Naive thymus-derived CD4-positive, alpha-beta T cell (primary cell): ENCODE measurements at regions of chr15 and their contacts with region 1.

Region 1: DNA sequence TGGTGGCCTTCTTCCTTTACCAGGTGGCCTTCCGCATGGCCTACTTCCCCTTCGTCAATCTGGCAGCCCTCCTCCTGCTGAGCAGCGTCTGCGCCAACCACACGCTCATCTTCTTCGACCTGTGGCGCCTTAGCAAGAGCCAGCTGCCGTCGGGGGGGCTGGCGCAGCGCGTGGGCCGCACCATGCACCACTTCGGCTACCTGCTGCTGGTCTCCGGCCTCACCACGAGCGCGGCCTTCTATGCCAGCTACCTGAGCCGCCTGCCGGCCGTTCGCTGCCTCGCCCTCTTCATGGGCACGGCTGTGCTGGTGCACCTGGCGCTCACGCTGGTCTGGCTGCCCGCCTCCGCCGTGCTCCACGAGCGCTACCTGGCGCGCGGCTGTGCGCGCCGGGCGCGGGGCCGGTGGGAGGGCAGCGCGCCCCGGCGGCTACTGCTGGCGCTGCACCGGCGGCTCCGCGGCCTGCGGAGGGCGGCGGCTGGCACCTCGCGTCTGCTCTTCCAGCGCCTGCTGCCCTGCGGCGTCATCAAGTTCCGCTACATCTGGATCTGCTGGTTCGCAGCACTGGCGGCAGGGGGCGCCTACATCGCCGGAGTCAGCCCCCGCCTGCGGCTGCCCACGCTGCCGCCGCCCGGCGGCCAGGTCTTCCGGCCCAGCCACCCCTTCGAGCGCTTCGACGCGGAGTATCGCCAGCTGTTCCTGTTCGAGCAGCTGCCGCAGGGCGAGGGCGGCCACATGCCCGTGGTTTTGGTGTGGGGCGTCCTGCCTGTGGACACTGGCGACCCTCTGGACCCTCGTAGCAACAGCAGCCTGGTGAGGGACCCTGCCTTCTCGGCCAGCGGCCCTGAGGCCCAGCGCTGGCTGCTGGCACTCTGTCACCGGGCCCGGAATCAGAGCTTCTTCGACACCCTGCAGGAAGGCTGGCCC is 9.9 kb downstream of the DISP2 start:
- DNase-seq: peak; percentile 82 to 89 (median 86)
- ATAC-seq: peak; percentile 98
- H3K4me3 ChIP-seq: peak overlapping the region; percentile 59
- H3K4me3 Mint-ChIP-seq: peak overlapping the region; percentile 80 to 91 (median 85)
- H3K27ac ChIP-seq: no peak overlapping the region
- H3K27ac Mint-ChIP-seq: peak overlapping the region in 8 of 9 donors; percentile 45 to 91 (median 79)
- H3K4me1 ChIP-seq: peaks cover 19 to 24% of the 10 kb centered on the region in 2 donors
- H3K4me1 Mint-ChIP-seq: peaks cover 14 to 33% (median 26%) of the 10 kb centered on the region in 7 donors
- H3K27me3 ChIP-seq: no peaks in the 10 kb centered on the region
- H3K27me3 Mint-ChIP-seq: peaks cover 0 to 16% (median 0%) of the 10 kb centered on the region in 5 donors

Region 2: GRCh38 chr15:40331026-40331425 is 36.9 kb before region 1 on chr15:
- CTCF ChIA-PET with region 1: no interaction called
- POLR2A ChIA-PET with region 1: no interaction called
- intact Hi-C with region 1: no loop called
- DNase-seq: no peak
- ATAC-seq: no peak
- H3K4me3 ChIP-seq: no peak overlapping the region
- H3K4me3 Mint-ChIP-seq: no peak overlapping the region
- H3K27ac ChIP-seq: no peak overlapping the region
- H3K27ac Mint-ChIP-seq: no peak overlapping the region
- H3K4me1 ChIP-seq: peaks cover 0 to 14% of the 10 kb centered on the region in 2 donors
- H3K4me1 Mint-ChIP-seq: peaks cover 0 to 39% (median 33%) of the 10 kb centered on the region in 7 donors
- H3K27me3 ChIP-seq: no peaks in the 10 kb centered on the region
- H3K27me3 Mint-ChIP-seq: peaks cover 0 to under 1% (median 0%) of the 10 kb centered on the region in 5 donors

Region 3: DNA sequence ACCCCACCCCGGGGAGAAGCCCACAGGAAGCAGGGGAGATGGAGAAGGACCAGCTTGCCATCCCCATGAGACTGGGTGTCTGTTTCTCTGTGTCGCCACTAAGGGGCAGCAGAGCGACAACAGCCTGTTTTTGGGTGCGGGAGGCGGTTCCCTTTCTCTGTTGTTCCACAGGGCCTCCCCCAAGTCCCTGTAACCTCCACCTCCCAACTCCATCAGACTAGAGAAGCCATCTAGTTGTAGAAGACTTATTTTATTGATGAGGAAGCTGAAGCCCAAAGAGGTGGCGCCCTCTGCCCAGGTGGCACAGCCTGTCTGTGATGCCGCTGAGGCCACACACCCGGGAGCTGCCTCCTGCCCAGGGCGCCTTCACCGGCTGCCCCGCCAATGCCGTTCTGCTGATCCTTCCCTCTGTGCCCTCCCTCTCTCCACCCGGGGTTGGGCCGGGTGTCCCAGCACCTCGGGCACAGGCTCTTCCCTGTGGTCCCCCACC is 23.3 kb before region 1 on chr15:
- CTCF ChIA-PET with region 1: interaction called, 7 read pairs
- POLR2A ChIA-PET with region 1: no interaction called
- intact Hi-C with region 1: loop called (anchors 1 kb)
- DNase-seq: peak; percentile 49 to 75 (median 65)
- ATAC-seq: peak; percentile 85
- H3K4me3 ChIP-seq: no peak overlapping the region
- H3K4me3 Mint-ChIP-seq: no peak overlapping the region
- H3K27ac ChIP-seq: no peak overlapping the region
- H3K27ac Mint-ChIP-seq: no peak overlapping the region
- H3K4me1 ChIP-seq: no peaks in the 10 kb centered on the region
- H3K4me1 Mint-ChIP-seq: peaks cover 0 to 8% (median 0%) of the 10 kb centered on the region in 7 donors
- H3K27me3 ChIP-seq: no peaks in the 10 kb centered on the region
- H3K27me3 Mint-ChIP-seq: no peaks in the 10 kb centered on the region

Region 4: GRCh38 chr15:40357723-40358470 is 10.1 kb before region 1 on chr15 and contains the start of gene DISP2:
- CTCF ChIA-PET with region 1: interaction called, 5 read pairs
- POLR2A ChIA-PET with region 1: interaction called, 5 read pairs
- intact Hi-C with region 1: loop called (anchors 1 kb)
- DNase-seq: peak; percentile 80 to 97 (median 91)
- ATAC-seq: peak; percentile 94
- H3K4me3 ChIP-seq: peak within 1 kb of the TSS; percentile 63
- H3K4me3 Mint-ChIP-seq: peak within 1 kb of the TSS; percentile 75 to 90 (median 83)
- H3K27ac ChIP-seq: no peak within 1 kb of the TSS
- H3K27ac Mint-ChIP-seq: peak within 1 kb of the TSS in 2 of 9 donors; percentile 38 to 48
- H3K4me1 ChIP-seq: peaks cover 0 to 12% of the 10 kb centered on the region in 2 donors
- H3K4me1 Mint-ChIP-seq: peaks cover 7 to 15% (median 13%) of the 10 kb centered on the region in 7 donors
- H3K27me3 ChIP-seq: no peaks in the 10 kb centered on the region
- H3K27me3 Mint-ChIP-seq: peaks cover 0 to 30% (median 9%) of the 10 kb centered on the region in 5 donors
- total RNA-seq, gene DISP2: 0.05 to 0.51 (median 0.07) TPM in 4 of 5 experiments, not detected in the other

Region 5: GRCh38 chr15:40405501-40406381 is 37.8 kb after region 1 on chr15 and contains the start of gene IVD:
- CTCF ChIA-PET with region 1: no interaction called
- POLR2A ChIA-PET with region 1: interaction called, 3 read pairs
- intact Hi-C with region 1: loop called (anchors 1 to 2 kb)
- DNase-seq: peak; percentile 67 to 88 (median 79)
- ATAC-seq: peak; percentile 99
- H3K4me3 ChIP-seq: peak within 1 kb of the TSS; percentile 49
- H3K4me3 Mint-ChIP-seq: peak within 1 kb of the TSS; percentile 79 to 94 (median 92)
- H3K27ac ChIP-seq: peak within 1 kb of the TSS; percentile 70
- H3K27ac Mint-ChIP-seq: peak within 1 kb of the TSS; percentile 38 to 92 (median 90)
- H3K4me1 ChIP-seq: peaks cover 6 to 15% of the 10 kb centered on the region in 2 donors
- H3K4me1 Mint-ChIP-seq: peaks cover 9 to 49% (median 30%) of the 10 kb centered on the region in 7 donors
- H3K27me3 ChIP-seq: no peaks in the 10 kb centered on the region
- H3K27me3 Mint-ChIP-seq: no peaks in the 10 kb centered on the region
- total RNA-seq, gene IVD: 47.2 to 81.8 (median 64.7) TPM

Region 6: GRCh38 chr15:40470423-40471104 is 102.6 kb after region 1 on chr15 and contains the start of gene CHST14:
- CTCF ChIA-PET with region 1: no interaction called
- POLR2A ChIA-PET with region 1: no interaction called
- intact Hi-C with region 1: loop called in 1 of 2 experiments (anchors 1 kb)
- DNase-seq: peak; percentile 24 to 68 (median 53)
- ATAC-seq: peak; percentile 88
- H3K4me3 ChIP-seq: peak within 1 kb of the TSS; percentile 89
- H3K4me3 Mint-ChIP-seq: peak within 1 kb of the TSS; percentile 90 to 96 (median 92)
- H3K27ac ChIP-seq: peak within 1 kb of the TSS; percentile 81
- H3K27ac Mint-ChIP-seq: peak within 1 kb of the TSS; percentile 80 to 95 (median 87)
- H3K4me1 ChIP-seq: peaks cover 8 to 16% of the 10 kb centered on the region in 2 donors
- H3K4me1 Mint-ChIP-seq: peaks cover 15 to 47% (median 37%) of the 10 kb centered on the region in 7 donors
- H3K27me3 ChIP-seq: no peaks in the 10 kb centered on the region
- H3K27me3 Mint-ChIP-seq: peaks cover 0 to 3% (median 0%) of the 10 kb centered on the region in 5 donors
- total RNA-seq, gene CHST14: 7.3 to 12.5 (median 10.8) TPM

Region 7: DNA sequence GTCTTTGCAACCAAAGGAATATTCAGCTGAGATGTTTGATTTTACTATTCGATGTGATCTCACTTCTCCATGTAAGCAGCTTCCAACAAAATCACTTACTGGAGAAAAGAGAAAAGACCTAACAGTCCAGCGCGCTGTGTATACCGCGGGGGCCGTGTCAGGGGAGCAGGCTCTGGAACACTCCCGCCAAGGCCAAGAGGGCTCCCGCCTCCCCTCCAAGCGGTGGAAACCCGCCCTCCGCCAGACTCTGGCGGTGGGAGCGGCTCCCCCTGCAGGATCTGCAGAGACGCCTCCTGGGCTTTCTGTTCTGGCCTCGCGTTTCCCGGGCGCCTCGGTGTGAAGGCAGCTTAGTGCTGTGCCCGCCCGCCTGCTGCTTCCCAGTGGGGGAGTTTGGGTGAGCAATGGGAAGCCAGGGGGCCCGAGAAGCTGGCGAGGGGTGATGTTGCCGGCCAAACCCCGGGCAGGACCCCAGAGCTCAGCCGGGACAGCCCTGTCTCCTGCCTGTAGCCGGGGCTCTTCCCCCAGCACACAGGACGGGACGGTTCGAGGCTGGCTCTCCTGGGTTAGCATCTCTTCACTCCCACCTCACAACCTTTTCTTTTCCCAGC is 139.1 kb after region 1 on chr15:
- CTCF ChIA-PET with region 1: no interaction called
- POLR2A ChIA-PET with region 1: no interaction called
- intact Hi-C with region 1: loop called in 1 of 2 experiments (anchors 1 kb)
- DNase-seq: peak; percentile 30 to 69 (median 52)
- ATAC-seq: peak; percentile 83
- H3K4me3 ChIP-seq: no peak overlapping the region
- H3K4me3 Mint-ChIP-seq: peak overlapping the region in 9 of 10 donors; percentile 5 to 61 (median 48)
- H3K27ac ChIP-seq: no peak overlapping the region
- H3K27ac Mint-ChIP-seq: no peak overlapping the region
- H3K4me1 ChIP-seq: peaks cover 0 to 11% of the 10 kb centered on the region in 2 donors
- H3K4me1 Mint-ChIP-seq: peaks cover 16 to 26% (median 23%) of the 10 kb centered on the region in 7 donors
- H3K27me3 ChIP-seq: peaks cover 9 to 15% of the 10 kb centered on the region in 2 donors
- H3K27me3 Mint-ChIP-seq: peaks cover 55 to 86% (median 60%) of the 10 kb centered on the region in 5 donors

Region 8: GRCh38 chr15:40593588-40594428 is 225.9 kb after region 1 on chr15 and contains the start of gene KNL1:
- CTCF ChIA-PET with region 1: no interaction called
- POLR2A ChIA-PET with region 1: no interaction called
- intact Hi-C with region 1: no loop called
- DNase-seq: peak; percentile 83 to 94 (median 91)
- ATAC-seq: peak; percentile 85
- H3K4me3 ChIP-seq: peak within 1 kb of the TSS; percentile 98
- H3K4me3 Mint-ChIP-seq: peak within 1 kb of the TSS; percentile 91 to 99 (median 96)
- H3K27ac ChIP-seq: peak within 1 kb of the TSS; percentile 83
- H3K27ac Mint-ChIP-seq: peak within 1 kb of the TSS; percentile 91 to 100 (median 98)
- H3K4me1 ChIP-seq: peaks cover 11 to 12% of the 10 kb centered on the region in 2 donors
- H3K4me1 Mint-ChIP-seq: peaks cover 13 to 41% (median 25%) of the 10 kb centered on the region in 7 donors
- H3K27me3 ChIP-seq: no peaks in the 10 kb centered on the region
- H3K27me3 Mint-ChIP-seq: peaks cover 0 to 12% (median 6%) of the 10 kb centered on the region in 5 donors
- total RNA-seq, gene KNL1: 0.16 to 41.5 (median 1.7) TPM

Region 9: GRCh38 chr15:40754883-40755811 is 387.2 kb after region 1 on chr15 and contains the start of gene RMDN3:
- CTCF ChIA-PET with region 1: no interaction called
- POLR2A ChIA-PET with region 1: no interaction called
- intact Hi-C with region 1: no loop called
- DNase-seq: peak; percentile 89 to 97 (median 92)
- ATAC-seq: peak; percentile 99
- H3K4me3 ChIP-seq: peak within 1 kb of the TSS; percentile 94
- H3K4me3 Mint-ChIP-seq: peak within 1 kb of the TSS; percentile 90 to 98 (median 94)
- H3K27ac ChIP-seq: peak within 1 kb of the TSS; percentile 95
- H3K27ac Mint-ChIP-seq: peak within 1 kb of the TSS; percentile 89 to 99 (median 95)
- H3K4me1 ChIP-seq: peaks cover 7 to 10% of the 10 kb centered on the region in 2 donors
- H3K4me1 Mint-ChIP-seq: peaks cover 16 to 37% (median 27%) of the 10 kb centered on the region in 7 donors
- H3K27me3 ChIP-seq: no peaks in the 10 kb centered on the region
- H3K27me3 Mint-ChIP-seq: no peaks in the 10 kb centered on the region
- total RNA-seq, gene RMDN3: 19.5 to 44.0 (median 31.9) TPM